ENCODE measurements at regions of chr10 and their contacts with region 1.

Region 1: GRCh38 chr10:70146489-70147258 is at the start of gene TYSND1:
- DNase-seq: peak; percentile 97
- ATAC-seq: peak; percentile 92
- H3K4me3 Mint-ChIP-seq: peak within 1 kb of the TSS; percentile 83
- H3K27ac Mint-ChIP-seq: peak within 1 kb of the TSS; percentile 93
- H3K4me1 Mint-ChIP-seq: peaks cover 32% of the 10 kb centered on the region
- H3K27me3 Mint-ChIP-seq: no peaks in the 10 kb centered on the region
- total RNA-seq, gene TYSND1: 11.5 to 14.9 TPM

Region 2: GRCh38 chr10:70081417-70081816 is 65.3 kb before region 1 on chr10:
- CTCF ChIA-PET with region 1: no interaction called
- POLR2A ChIA-PET with region 1: no interaction called
- intact Hi-C with region 1: no loop called
- DNase-seq: no peak
- ATAC-seq: no peak
- H3K4me3 Mint-ChIP-seq: no peak overlapping the region
- H3K27ac Mint-ChIP-seq: no peak overlapping the region
- H3K4me1 Mint-ChIP-seq: no peaks in the 10 kb centered on the region
- H3K27me3 Mint-ChIP-seq: no peaks in the 10 kb centered on the region

Region 3: GRCh38 chr10:70093335-70093944 is 53.2 kb before region 1 on chr10:
- CTCF ChIA-PET with region 1: interaction called, 18 read pairs
- POLR2A ChIA-PET with region 1: no interaction called
- intact Hi-C with region 1: loop called in 1 of 2 experiments (anchors 1 kb)
- DNase-seq: peak; percentile 52
- ATAC-seq: peak; percentile 92
- H3K4me3 Mint-ChIP-seq: peak overlapping the region; percentile 72
- H3K27ac Mint-ChIP-seq: peak overlapping the region; percentile 80
- H3K4me1 Mint-ChIP-seq: peaks cover 36% of the 10 kb centered on the region
- H3K27me3 Mint-ChIP-seq: no peaks in the 10 kb centered on the region

Region 4: GRCh38 chr10:70132098-70133029 is 14.3 kb before region 1 on chr10 and contains the start of gene AIFM2:
- CTCF ChIA-PET with region 1: interaction called, 12 read pairs
- POLR2A ChIA-PET with region 1: interaction called, 3 read pairs
- intact Hi-C with region 1: no loop called
- DNase-seq: peak; percentile 61
- ATAC-seq: peak; percentile 81
- H3K4me3 Mint-ChIP-seq: peak within 1 kb of the TSS; percentile 77
- H3K27ac Mint-ChIP-seq: peak within 1 kb of the TSS; percentile 79
- H3K4me1 Mint-ChIP-seq: peaks cover 13% of the 10 kb centered on the region
- H3K27me3 Mint-ChIP-seq: no peaks in the 10 kb centered on the region
- total RNA-seq, gene AIFM2: 4.6 to 5.2 TPM

Region 5: GRCh38 chr10:70169649-70170364 is 23.1 kb after region 1 on chr10:
- CTCF ChIA-PET with region 1: interaction called, 25 read pairs
- POLR2A ChIA-PET with region 1: interaction called, 32 read pairs
- intact Hi-C with region 1: loop called (anchors 1 kb)
- DNase-seq: no peak
- ATAC-seq: peak; percentile 5
- H3K4me3 Mint-ChIP-seq: peak overlapping the region; percentile 94
- H3K27ac Mint-ChIP-seq: peak overlapping the region; percentile 84
- H3K4me1 Mint-ChIP-seq: peaks cover 64% of the 10 kb centered on the region
- H3K27me3 Mint-ChIP-seq: no peaks in the 10 kb centered on the region

Region 6: DNA sequence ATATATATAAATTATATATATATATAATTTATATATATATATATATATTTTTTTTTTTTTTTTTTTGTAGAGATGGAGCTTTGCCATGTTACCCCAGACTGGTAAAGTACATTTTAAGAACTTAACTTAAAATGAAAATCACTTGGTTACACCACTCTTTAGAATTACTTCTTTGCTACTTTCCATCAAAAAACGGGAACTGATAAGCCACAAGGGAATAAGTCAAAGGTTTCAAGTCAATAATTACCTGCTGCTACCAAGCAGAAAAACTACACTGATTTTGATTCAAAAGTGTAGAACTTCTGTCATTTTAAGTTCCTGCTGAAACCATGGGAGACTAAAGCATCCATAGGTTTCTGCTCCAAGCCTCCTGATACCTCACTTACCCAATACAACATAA is 74.4 kb after region 1 on chr10:
- CTCF ChIA-PET with region 1: interaction called, 19 read pairs
- POLR2A ChIA-PET with region 1: interaction called, 3 read pairs
- intact Hi-C with region 1: no loop called
- DNase-seq: no peak
- ATAC-seq: no peak
- H3K4me3 Mint-ChIP-seq: no peak overlapping the region
- H3K27ac Mint-ChIP-seq: no peak overlapping the region
- H3K4me1 Mint-ChIP-seq: peaks cover 36% of the 10 kb centered on the region
- H3K27me3 Mint-ChIP-seq: no peaks in the 10 kb centered on the region

Region 7: GRCh38 chr10:70363971-70364771 is 217.5 kb after region 1 on chr10:
- CTCF ChIA-PET with region 1: interaction called, 20 read pairs
- POLR2A ChIA-PET with region 1: no interaction called
- intact Hi-C with region 1: loop called in 1 of 2 experiments (anchors 10 kb)
- DNase-seq: peak; percentile 93
- ATAC-seq: peak; percentile 100
- H3K4me3 Mint-ChIP-seq: no peak overlapping the region
- H3K27ac Mint-ChIP-seq: no peak overlapping the region
- H3K4me1 Mint-ChIP-seq: peaks cover 6% of the 10 kb centered on the region
- H3K27me3 Mint-ChIP-seq: no peaks in the 10 kb centered on the region

Region 8: DNA sequence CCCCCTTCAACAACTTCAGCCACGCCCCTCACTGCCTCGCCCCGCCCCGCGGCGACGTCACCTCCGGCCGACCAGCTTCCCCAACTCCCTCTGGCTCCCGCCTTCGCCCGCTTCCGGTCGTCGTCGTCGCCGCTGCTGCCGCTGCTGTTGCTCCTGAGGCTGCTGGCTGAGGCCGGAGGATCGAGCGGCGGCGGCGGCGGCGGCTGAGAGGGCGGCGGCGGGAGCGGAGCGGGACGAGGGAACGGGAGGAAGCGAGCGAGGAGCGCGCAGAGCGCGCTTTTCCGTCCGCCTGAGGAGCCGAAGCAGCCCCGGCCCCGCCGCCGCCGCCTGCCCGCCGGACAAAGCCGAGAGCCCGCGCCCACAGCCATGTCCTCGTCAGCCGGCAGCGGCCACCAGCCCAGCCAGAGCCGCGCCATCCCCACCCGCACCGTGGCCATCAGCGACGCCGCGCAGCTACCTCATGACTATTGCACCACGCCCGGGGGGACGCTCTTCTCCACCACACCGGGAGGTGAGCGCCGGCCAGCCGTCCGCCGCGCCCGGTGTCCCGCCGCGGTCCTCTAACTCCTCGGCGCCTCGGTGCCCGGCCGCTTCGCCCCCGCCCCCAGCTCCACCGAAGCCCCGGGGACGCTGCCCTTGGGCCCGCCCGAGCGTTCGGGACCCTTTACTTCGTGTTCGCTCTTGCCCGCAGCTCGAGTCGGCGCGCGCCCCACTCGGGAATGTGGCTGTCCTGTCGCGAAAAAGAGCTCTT is 257.5 kb after region 1 on chr10 and contains the start of gene EIF4EBP2:
- CTCF ChIA-PET with region 1: interaction called, 8 read pairs
- POLR2A ChIA-PET with region 1: interaction called, 11 read pairs
- intact Hi-C with region 1: loop called in 1 of 2 experiments (anchors 1 kb)
- DNase-seq: peak; percentile 99
- ATAC-seq: peak; percentile 91
- H3K4me3 Mint-ChIP-seq: peak within 1 kb of the TSS; percentile 94
- H3K27ac Mint-ChIP-seq: peak within 1 kb of the TSS; percentile 91
- H3K4me1 Mint-ChIP-seq: peaks cover 37% of the 10 kb centered on the region
- H3K27me3 Mint-ChIP-seq: no peaks in the 10 kb centered on the region
- total RNA-seq, gene EIF4EBP2: 24.4 to 27.7 TPM

Measured in activated CD4-positive, alpha-beta T cell treated with anti-CD3 and anti-CD28 coated beads for 36 hours (primary cell).